ENCODE measurements at regions of chr7 and their contacts with region 1.

Region 1: GRCh38 chr7:37448636-37449361 is at the start of gene ELMO1:
- DNase-seq: peak; percentile 81
- ATAC-seq: peak; percentile 81
- H3K4me3 Mint-ChIP-seq: peak within 1 kb of the TSS; percentile 92
- H3K27ac Mint-ChIP-seq: peak within 1 kb of the TSS; percentile 99
- H3K4me1 Mint-ChIP-seq: peaks cover 47% of the 10 kb centered on the region
- H3K27me3 Mint-ChIP-seq: no peaks in the 10 kb centered on the region
- CTCF ChIP-seq: no peak
- total RNA-seq, gene ELMO1: 108 and 132 TPM in 2 replicates

Region 2: GRCh38 chr7:36152756-36153570 is 1295.8 kb before region 1 on chr7 and contains the start of gene EEPD1:
- CTCF ChIA-PET with region 1: no interaction called
- POLR2A ChIA-PET with region 1: no interaction called
- intact Hi-C with region 1: loop called (anchors 5 kb)
- DNase-seq: peak; percentile 100
- ATAC-seq: peak; percentile 92
- H3K4me3 Mint-ChIP-seq: peak within 1 kb of the TSS; percentile 80
- H3K27ac Mint-ChIP-seq: no peak within 1 kb of the TSS
- H3K4me1 Mint-ChIP-seq: peaks cover 11% of the 10 kb centered on the region
- H3K27me3 Mint-ChIP-seq: peaks cover 3% of the 10 kb centered on the region
- CTCF ChIP-seq: no peak
- total RNA-seq, gene EEPD1: 0.59 and 0.64 TPM in 2 replicates

Region 3: GRCh38 chr7:37234928-37235327 is 213.9 kb before region 1 on chr7:
- CTCF ChIA-PET with region 1: interaction called, 5 read pairs
- POLR2A ChIA-PET with region 1: no interaction called
- intact Hi-C with region 1: loop called (anchors 1 kb)
- DNase-seq: no peak
- ATAC-seq: no peak
- H3K4me3 Mint-ChIP-seq: no peak overlapping the region
- H3K27ac Mint-ChIP-seq: no peak overlapping the region
- H3K4me1 Mint-ChIP-seq: peaks cover 2% of the 10 kb centered on the region
- H3K27me3 Mint-ChIP-seq: no peaks in the 10 kb centered on the region
- CTCF ChIP-seq: no peak

Region 4: DNA sequence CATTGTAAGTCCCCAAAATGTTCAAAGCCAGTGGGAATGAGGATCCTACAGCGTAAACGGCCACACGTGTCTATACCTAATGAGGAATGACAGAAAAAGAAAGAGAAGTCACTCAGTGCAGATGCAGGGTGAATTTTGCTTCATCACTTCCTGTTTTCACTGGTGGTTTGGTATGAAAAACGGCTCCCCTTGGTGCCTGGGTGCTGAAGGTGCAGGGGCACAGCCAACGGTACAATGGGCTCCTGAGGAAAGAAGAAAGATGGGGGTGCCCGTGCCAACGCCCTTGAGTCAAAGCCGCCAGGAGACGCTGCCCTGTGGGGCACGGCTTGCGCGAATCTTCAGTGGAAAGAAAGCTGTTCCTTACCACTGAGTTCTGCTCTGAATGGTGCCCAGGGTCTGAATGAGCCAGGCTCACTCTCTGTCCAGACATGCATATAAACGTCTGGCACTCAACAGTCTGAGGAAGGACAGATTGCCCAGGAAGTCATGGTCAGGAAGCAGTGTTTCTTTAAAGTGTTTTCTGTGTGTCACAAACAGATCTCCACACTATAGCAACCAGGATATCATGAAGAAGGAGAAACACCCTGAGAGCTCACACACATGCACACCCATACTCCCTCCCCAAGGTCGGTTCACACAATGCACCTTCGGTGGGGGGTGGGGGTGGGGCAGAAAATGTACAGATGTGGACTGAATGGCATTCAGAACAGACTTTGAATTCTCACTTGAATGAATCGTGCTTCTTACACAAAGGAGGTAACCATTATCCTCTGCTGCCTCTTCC is 105.9 kb before region 1 on chr7:
- CTCF ChIA-PET with region 1: interaction called, 3 read pairs
- POLR2A ChIA-PET with region 1: interaction called, 26 read pairs
- intact Hi-C with region 1: loop called (anchors 2 kb)
- DNase-seq: peak; percentile 59
- ATAC-seq: peak; percentile 86
- H3K4me3 Mint-ChIP-seq: peak overlapping the region; percentile 98
- H3K27ac Mint-ChIP-seq: peak overlapping the region; percentile 98
- H3K4me1 Mint-ChIP-seq: peaks cover 85% of the 10 kb centered on the region
- H3K27me3 Mint-ChIP-seq: no peaks in the 10 kb centered on the region
- CTCF ChIP-seq: no peak

Region 5: GRCh38 chr7:37419496-37419895 is 29.3 kb before region 1 on chr7:
- CTCF ChIA-PET with region 1: no interaction called
- POLR2A ChIA-PET with region 1: interaction called, 3 read pairs
- intact Hi-C with region 1: loop called (anchors 2 kb)
- DNase-seq: no peak
- ATAC-seq: peak; percentile 84
- H3K4me3 Mint-ChIP-seq: no peak overlapping the region
- H3K27ac Mint-ChIP-seq: no peak overlapping the region
- H3K4me1 Mint-ChIP-seq: peaks cover 50% of the 10 kb centered on the region
- H3K27me3 Mint-ChIP-seq: no peaks in the 10 kb centered on the region
- CTCF ChIP-seq: no peak

Region 6: GRCh38 chr7:37786741-37787569 is 338.2 kb after region 1 on chr7:
- CTCF ChIA-PET with region 1: no interaction called
- POLR2A ChIA-PET with region 1: interaction called, 5 read pairs
- intact Hi-C with region 1: loop called (anchors 1 kb)
- DNase-seq: no peak
- ATAC-seq: peak; percentile 89
- H3K4me3 Mint-ChIP-seq: peak overlapping the region; percentile 74
- H3K27ac Mint-ChIP-seq: peak overlapping the region; percentile 99
- H3K4me1 Mint-ChIP-seq: peaks cover 41% of the 10 kb centered on the region
- H3K27me3 Mint-ChIP-seq: no peaks in the 10 kb centered on the region
- CTCF ChIP-seq: no peak